ENCODE measurements at regions of chr6 and their contacts with region 1.

Region 1: GRCh38 chr6:98834060-98835031 is at the start of gene POU3F2:
- DNase-seq: peak; percentile 43 to 71 (median 52)
- H3K4me3 ChIP-seq: peak within 1 kb of the TSS; percentile 56 to 61
- H3K4me3 Mint-ChIP-seq: peak within 1 kb of the TSS; percentile 86 to 99 (median 90)
- H3K27ac ChIP-seq: no peak within 1 kb of the TSS
- H3K27ac Mint-ChIP-seq: peak within 1 kb of the TSS in 3 of 7 donors; percentile 35 to 85 (median 77)
- H3K4me1 ChIP-seq: peaks cover 53% of the 10 kb centered on the region
- H3K4me1 Mint-ChIP-seq: peaks cover 26 to 65% (median 42%) of the 10 kb centered on the region in 4 donors
- H3K27me3 ChIP-seq: peaks cover 70% of the 10 kb centered on the region
- H3K27me3 Mint-ChIP-seq: peaks cover 56 to 64% of the 10 kb centered on the region in 2 donors
- total RNA-seq, gene POU3F2: not detected

Region 2: GRCh38 chr6:97282726-97283617 is 1551.4 kb before region 1 on chr6 and contains the start of gene MMS22L:
- CTCF ChIA-PET with region 1: no interaction called
- POLR2A ChIA-PET with region 1: no interaction called
- intact Hi-C with region 1: loop called (anchors 5 kb)
- DNase-seq: peak; percentile 92 to 93 (median 93)
- H3K4me3 ChIP-seq: peak within 1 kb of the TSS; percentile 73 to 92
- H3K4me3 Mint-ChIP-seq: peak within 1 kb of the TSS; percentile 92 to 98 (median 96)
- H3K27ac ChIP-seq: peak within 1 kb of the TSS; percentile 64
- H3K27ac Mint-ChIP-seq: peak within 1 kb of the TSS; percentile 86 to 96 (median 92)
- H3K4me1 ChIP-seq: peaks cover 22% of the 10 kb centered on the region
- H3K4me1 Mint-ChIP-seq: peaks cover 16 to 37% (median 26%) of the 10 kb centered on the region in 4 donors
- H3K27me3 ChIP-seq: no peaks in the 10 kb centered on the region
- H3K27me3 Mint-ChIP-seq: no peaks in the 10 kb centered on the region
- total RNA-seq, gene MMS22L: 12.4 to 13.2 TPM

Region 3: GRCh38 chr6:97805596-97805995 is 1028.8 kb before region 1 on chr6:
- CTCF ChIA-PET with region 1: no interaction called
- POLR2A ChIA-PET with region 1: no interaction called
- intact Hi-C with region 1: no loop called
- DNase-seq: no peak
- H3K4me3 ChIP-seq: no peak overlapping the region
- H3K4me3 Mint-ChIP-seq: no peak overlapping the region
- H3K27ac ChIP-seq: no peak overlapping the region
- H3K27ac Mint-ChIP-seq: no peak overlapping the region
- H3K4me1 ChIP-seq: no peaks in the 10 kb centered on the region
- H3K4me1 Mint-ChIP-seq: no peaks in the 10 kb centered on the region
- H3K27me3 ChIP-seq: no peaks in the 10 kb centered on the region
- H3K27me3 Mint-ChIP-seq: no peaks in the 10 kb centered on the region

Region 4: GRCh38 chr6:98067375-98067774 is 767.0 kb before region 1 on chr6:
- CTCF ChIA-PET with region 1: no interaction called
- POLR2A ChIA-PET with region 1: no interaction called
- intact Hi-C with region 1: no loop called
- DNase-seq: no peak
- H3K4me3 ChIP-seq: no peak overlapping the region
- H3K4me3 Mint-ChIP-seq: no peak overlapping the region
- H3K27ac ChIP-seq: no peak overlapping the region
- H3K27ac Mint-ChIP-seq: no peak overlapping the region
- H3K4me1 ChIP-seq: no peaks in the 10 kb centered on the region
- H3K4me1 Mint-ChIP-seq: no peaks in the 10 kb centered on the region
- H3K27me3 ChIP-seq: no peaks in the 10 kb centered on the region
- H3K27me3 Mint-ChIP-seq: no peaks in the 10 kb centered on the region

Region 5: DNA sequence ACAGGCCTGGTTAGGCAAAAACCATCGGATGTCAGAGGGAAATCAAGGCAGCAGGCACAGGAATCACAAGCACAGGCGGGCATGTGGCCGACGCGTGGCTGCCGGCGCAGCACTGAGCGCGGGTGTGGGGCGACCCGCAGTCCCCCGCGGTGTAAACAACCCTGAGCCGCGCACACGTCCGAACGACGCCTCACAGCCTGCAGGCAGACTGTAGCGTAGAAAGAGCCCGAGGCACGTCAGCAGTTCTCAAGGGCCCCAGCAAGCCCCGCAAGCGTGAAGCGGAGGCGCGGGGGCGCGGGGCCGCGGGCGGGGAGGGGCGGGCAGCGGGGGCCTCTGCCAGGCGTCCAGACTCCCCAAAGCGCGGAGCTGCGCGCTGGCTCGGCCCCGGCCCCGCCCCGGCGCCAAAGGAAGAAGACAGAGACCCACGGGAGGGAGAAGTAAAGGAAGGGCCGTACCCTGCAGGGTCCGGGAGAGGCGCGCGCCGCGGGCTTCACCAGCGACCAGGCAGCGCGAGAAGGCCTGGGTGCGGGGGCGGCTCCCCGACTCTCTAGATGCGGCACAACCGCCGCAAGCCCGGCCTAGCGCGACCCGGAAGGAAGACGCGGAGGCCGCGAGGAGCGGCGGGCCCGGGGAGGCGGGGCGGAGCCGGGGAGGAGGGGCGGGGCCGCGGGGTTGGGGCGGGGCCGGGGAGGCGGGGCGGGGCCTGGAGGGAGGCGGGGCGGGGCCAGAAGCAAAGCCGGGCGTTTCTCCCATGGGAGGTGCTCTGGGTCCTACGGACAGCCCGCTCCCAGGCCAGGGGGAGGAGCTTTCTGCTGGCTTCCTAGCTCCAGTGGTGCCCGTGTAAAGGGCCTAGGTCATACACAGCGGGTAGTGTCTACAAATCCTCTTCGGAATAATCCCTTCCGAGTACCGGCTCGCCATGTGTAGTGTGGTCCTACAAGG is 113.3 kb after region 1 on chr6 and contains the start of gene FBXL4:
- CTCF ChIA-PET with region 1: no interaction called
- POLR2A ChIA-PET with region 1: no interaction called
- intact Hi-C with region 1: loop called (anchors 5 kb)
- DNase-seq: peak; percentile 75 to 81 (median 79)
- H3K4me3 ChIP-seq: peak within 1 kb of the TSS; percentile 84 to 85
- H3K4me3 Mint-ChIP-seq: peak within 1 kb of the TSS; percentile 88 to 97 (median 95)
- H3K27ac ChIP-seq: peak within 1 kb of the TSS; percentile 51
- H3K27ac Mint-ChIP-seq: peak within 1 kb of the TSS; percentile 89 to 96 (median 93)
- H3K4me1 ChIP-seq: peaks cover 26% of the 10 kb centered on the region
- H3K4me1 Mint-ChIP-seq: peaks cover 26 to 35% (median 29%) of the 10 kb centered on the region in 4 donors
- H3K27me3 ChIP-seq: no peaks in the 10 kb centered on the region
- H3K27me3 Mint-ChIP-seq: peaks cover 0 to 2% of the 10 kb centered on the region in 2 donors
- total RNA-seq, gene FBXL4: 21.6 to 22.9 TPM

Region 6: DNA sequence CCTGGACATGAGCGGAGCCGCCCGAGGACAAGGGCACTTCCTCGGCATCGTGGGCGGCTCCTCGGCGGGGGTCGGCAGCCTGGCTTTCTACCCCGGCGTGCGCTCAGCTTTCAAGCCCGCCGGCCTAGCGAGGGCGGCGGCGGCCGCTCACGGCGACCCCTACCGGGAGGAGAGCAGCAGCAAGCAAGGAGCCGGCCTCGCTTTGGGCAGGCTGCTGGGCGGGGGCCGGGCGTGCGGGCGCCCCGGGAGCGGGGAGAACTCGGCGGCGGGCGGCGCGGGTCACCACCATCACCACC is 779.0 kb after region 1 on chr6:
- CTCF ChIA-PET with region 1: no interaction called
- POLR2A ChIA-PET with region 1: no interaction called
- intact Hi-C with region 1: loop called (anchors 10 kb)
- DNase-seq: no peak
- H3K4me3 ChIP-seq: no peak overlapping the region
- H3K4me3 Mint-ChIP-seq: peak overlapping the region in 3 of 8 donors; percentile 35 to 80 (median 63)
- H3K27ac ChIP-seq: no peak overlapping the region
- H3K27ac Mint-ChIP-seq: no peak overlapping the region
- H3K4me1 ChIP-seq: peaks cover 31% of the 10 kb centered on the region
- H3K4me1 Mint-ChIP-seq: peaks cover 9 to 42% (median 21%) of the 10 kb centered on the region in 4 donors
- H3K27me3 ChIP-seq: peaks cover 90% of the 10 kb centered on the region
- H3K27me3 Mint-ChIP-seq: peaks cover 61 to 70% of the 10 kb centered on the region in 2 donors

Measured in CD4-positive, alpha-beta memory T cell (primary cell).